Adrenal gland (tissue), 19 donors: ENCODE measurements at regions of chr3 and their contacts with region 1.

Region 1: DNA sequence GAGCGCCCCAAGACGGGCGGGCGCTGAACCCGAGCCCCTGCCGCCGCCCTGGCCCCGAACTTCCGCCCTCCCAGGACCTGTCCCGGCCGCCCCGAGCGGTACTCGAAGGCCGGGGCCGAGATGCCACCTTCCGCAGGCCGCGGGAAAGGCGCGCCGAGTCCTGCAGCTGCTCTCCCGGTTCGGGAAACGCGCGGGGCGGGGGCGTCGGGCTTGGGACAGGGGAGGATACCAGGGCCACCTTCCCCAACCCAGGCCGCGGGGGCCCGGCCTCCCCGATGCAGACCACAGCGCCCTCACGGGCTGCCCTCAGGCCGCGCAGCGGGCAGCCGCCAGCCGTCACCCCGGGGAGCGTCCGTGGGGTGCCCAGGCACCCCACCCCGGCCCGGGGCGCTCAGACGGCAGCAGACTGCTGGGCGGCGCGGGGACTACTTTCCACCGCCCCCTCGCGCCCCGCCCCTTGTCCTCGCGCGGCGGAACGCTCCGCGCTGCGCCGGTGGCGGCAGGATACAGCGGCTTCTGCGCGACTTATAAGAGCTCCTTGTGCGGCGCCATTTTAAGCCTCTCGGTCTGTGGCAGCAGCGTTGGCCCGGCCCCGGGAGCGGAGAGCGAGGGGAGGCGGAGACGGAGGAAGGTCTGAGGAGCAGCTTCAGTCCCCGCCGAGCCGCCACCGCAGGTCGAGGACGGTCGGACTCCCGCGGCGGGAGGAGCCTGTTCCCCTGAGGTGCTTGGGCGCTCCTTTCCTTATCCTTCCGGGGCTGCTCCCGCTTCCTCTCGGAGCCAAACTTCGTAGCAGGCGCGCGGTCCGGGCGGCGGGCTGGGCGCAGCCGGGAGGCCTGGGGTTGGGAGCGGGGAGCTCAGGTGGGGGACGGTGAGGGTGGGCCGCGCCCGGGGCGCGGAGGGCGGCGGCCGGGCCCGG is at the start of gene CTNNB1:
- DNase-seq: peak; percentile 91 to 97 (median 94)
- H3K4me3 ChIP-seq: peak within 1 kb of the TSS; percentile 85 to 99 (median 96)
- H3K27ac ChIP-seq: peak within 1 kb of the TSS; percentile 88 to 99 (median 96)
- H3K4me1 ChIP-seq: peaks cover 17 to 33% of the 10 kb centered on the region in 2 donors
- H3K27me3 ChIP-seq: no peaks in the 10 kb centered on the region
- CTCF ChIP-seq: peak in 2 of 6 experiments; percentile 17 to 23
- POLR2A ChIP-seq: peak; percentile 99
- total RNA-seq, gene CTNNB1: 313 to 970 (median 462) TPM

Region 2: GRCh38 chr3:40584625-40585189 is 614.5 kb before region 1 on chr3:
- intact Hi-C with region 1: loop called in 1 of 2 experiments (anchors 10 kb)
- DNase-seq: peak; percentile 80 to 95 (median 89)
- H3K4me3 ChIP-seq: no peak overlapping the region
- H3K27ac ChIP-seq: peak overlapping the region in 1 of 5 donors; percentile 19
- H3K4me1 ChIP-seq: peaks cover 0 to 3% of the 10 kb centered on the region in 2 donors
- H3K27me3 ChIP-seq: no peaks in the 10 kb centered on the region
- CTCF ChIP-seq: peak; percentile 74 to 97 (median 94)
- POLR2A ChIP-seq: no peak

Region 3: DNA sequence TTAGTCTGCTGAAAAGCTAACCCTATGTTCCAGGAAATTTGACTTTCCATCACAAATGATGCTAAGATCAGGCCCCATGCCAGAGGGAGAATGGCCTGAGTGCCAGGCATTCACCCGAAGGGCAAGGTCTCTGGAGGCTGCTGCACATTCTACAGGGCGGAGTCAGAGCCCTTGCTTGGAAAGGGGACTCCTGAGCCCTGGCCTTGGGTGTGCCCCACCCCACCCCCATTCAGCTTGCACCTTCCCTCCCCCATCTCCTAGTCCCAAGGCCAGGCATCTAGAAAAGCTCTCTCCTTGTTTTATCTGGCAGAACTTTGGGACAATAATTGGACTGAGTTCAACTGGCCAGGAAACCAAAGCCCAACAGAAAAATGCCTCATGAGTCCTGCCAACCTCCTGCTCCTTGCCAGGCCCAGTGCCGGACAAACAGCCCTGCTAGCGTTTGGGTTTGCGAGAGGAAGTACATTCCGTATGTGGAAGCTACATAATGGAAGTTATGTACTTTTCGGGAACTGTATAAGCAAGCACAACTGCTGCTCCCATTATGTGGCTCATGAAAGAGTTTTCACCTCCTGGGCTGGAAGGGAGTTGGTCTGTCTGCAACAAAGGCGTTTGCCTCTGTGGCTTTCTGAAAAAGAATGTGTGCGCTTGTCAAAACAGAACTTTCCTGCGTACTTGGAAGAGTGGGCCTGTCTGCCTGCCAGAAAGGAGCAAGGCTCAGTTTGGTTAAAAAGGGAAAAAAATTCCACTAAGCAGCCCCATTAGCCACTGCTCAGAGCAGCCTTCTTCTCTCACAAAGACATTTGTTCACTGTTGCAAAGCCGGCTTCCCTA is 321.4 kb before region 1 on chr3:
- intact Hi-C with region 1: loop called in 1 of 2 experiments (anchors 10 kb)
- DNase-seq: peak; percentile 61 to 94 (median 90)
- H3K4me3 ChIP-seq: no peak overlapping the region
- H3K27ac ChIP-seq: peak overlapping the region; percentile 49 to 87 (median 77)
- H3K4me1 ChIP-seq: peaks cover 13 to 21% of the 10 kb centered on the region in 2 donors
- H3K27me3 ChIP-seq: no peaks in the 10 kb centered on the region
- CTCF ChIP-seq: no peak
- POLR2A ChIP-seq: peak in 1 of 2 donors; percentile 18